ENCODE measurements at regions of chr7 and their contacts with region 1.

Region 1: GRCh38 chr7:49295146-49295545 is 370.8 kb downstream of the CDC14C start:
- DNase-seq: no peak
- ATAC-seq: no peak
- H3K4me3 ChIP-seq: no peak overlapping the region
- H3K27ac ChIP-seq: no peak overlapping the region
- H3K4me1 ChIP-seq: no peaks in the 10 kb centered on the region
- H3K27me3 ChIP-seq: no peaks in the 10 kb centered on the region
- CTCF ChIP-seq: no peak
- POLR2A ChIP-seq: no peak
- RAD21 ChIP-seq: no peak

Region 2: GRCh38 chr7:49763791-49764190 is 468.6 kb after region 1 on chr7:
- CTCF ChIA-PET with region 1: no interaction called
- POLR2A ChIA-PET with region 1: no interaction called
- RAD21 ChIA-PET with region 1: no interaction called
- intact Hi-C with region 1: loop called (anchors 10 kb)
- DNase-seq: no peak
- ATAC-seq: no peak
- H3K4me3 ChIP-seq: no peak overlapping the region
- H3K27ac ChIP-seq: no peak overlapping the region
- H3K4me1 ChIP-seq: no peaks in the 10 kb centered on the region
- H3K27me3 ChIP-seq: no peaks in the 10 kb centered on the region
- CTCF ChIP-seq: no peak
- POLR2A ChIP-seq: no peak
- RAD21 ChIP-seq: no peak